Transverse colon (tissue), 4 donors: ENCODE measurements at regions of chr3 and their contacts with region 1.

Region 1: DNA sequence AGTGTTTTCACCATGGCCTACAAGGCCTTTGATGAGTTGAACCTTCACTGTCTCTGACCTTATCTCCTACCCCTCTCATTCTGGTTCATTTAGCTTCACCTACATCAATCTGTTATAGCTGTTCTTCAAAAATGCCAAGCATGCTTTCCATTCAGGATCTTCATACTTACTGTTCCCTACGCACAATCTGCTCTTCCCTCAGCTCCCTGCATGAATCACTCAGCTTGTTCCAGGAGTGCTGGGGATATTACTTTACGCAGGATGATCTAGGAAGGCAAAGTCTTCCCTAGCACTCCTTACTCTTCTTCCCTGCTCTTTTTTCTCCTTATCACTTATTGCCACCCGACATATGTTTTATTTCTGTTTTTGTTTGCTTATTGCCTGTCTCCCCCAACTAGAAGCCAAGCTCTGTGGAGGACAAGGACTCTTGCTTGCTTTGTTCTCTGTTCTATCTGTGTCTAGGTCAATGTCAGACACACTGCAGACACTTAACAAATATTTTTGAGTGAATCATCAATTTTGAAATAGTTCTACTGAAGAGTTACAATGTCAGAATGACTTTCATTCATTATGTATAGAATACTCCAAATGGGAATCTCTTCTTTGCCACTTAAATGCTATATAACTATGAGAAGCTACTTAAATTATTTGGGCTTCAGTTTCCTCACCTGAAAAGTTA is 238.4 kb upstream of the FEZF2 start:
- DNase-seq: no peak
- H3K4me3 ChIP-seq: no peak overlapping the region
- H3K27ac ChIP-seq: no peak overlapping the region
- H3K4me1 ChIP-seq: no peaks in the 10 kb centered on the region
- H3K27me3 ChIP-seq: no peaks in the 10 kb centered on the region
- CTCF ChIP-seq: no peak
- EP300 ChIP-seq: no peak
- POLR2A ChIP-seq: no peak

Region 2: GRCh38 chr3:62378311-62378789 is 233.4 kb before region 1 on chr3:
- in situ Hi-C with region 1: no loop called
- intact Hi-C with region 1: no loop called
- DNase-seq: no peak
- H3K4me3 ChIP-seq: no peak overlapping the region
- H3K27ac ChIP-seq: no peak overlapping the region
- H3K4me1 ChIP-seq: peaks cover 0 to 15% (median 0%) of the 10 kb centered on the region in 4 donors
- H3K27me3 ChIP-seq: peaks cover 98% of the 10 kb centered on the region
- CTCF ChIP-seq: no peak
- EP300 ChIP-seq: no peak
- POLR2A ChIP-seq: no peak

Region 3: DNA sequence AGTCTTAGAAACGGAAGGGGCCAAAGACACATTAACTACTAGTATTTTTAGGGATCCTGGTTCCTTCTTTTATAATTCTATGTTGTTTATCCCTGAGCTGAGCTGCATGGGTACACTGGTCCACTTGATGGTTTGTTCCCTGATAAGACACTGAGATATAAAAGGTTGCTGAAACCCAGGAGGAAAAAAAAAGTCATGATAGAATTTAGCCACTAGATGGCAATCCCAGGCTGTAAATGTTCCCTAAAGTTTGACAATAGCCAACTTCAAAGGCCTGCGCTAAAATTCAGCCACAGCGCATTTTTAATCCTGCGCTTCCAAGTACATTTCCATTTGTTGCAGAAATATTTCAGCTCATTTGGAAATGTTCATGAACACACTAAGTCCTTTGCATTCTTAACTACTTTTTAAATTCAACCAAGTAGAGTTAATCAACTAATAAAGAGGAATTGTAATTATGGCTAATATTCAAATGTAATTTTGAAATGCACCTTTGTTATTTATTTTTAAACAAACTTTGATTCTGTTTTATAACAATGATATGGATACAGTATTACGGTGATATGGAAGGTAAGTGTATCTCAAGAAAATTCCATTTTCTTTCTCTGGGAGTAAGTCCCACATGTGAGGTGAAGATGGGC is 11.0 kb after region 1 on chr3:
- in situ Hi-C with region 1: no loop called
- intact Hi-C with region 1: loop called (anchors 1 kb)
- DNase-seq: no peak
- H3K4me3 ChIP-seq: no peak overlapping the region
- H3K27ac ChIP-seq: no peak overlapping the region
- H3K4me1 ChIP-seq: no peaks in the 10 kb centered on the region
- H3K27me3 ChIP-seq: no peaks in the 10 kb centered on the region
- CTCF ChIP-seq: peak; percentile 54 to 62 (median 58)
- EP300 ChIP-seq: no peak
- POLR2A ChIP-seq: no peak